Esophagus muscularis mucosa (tissue), 4 donors: ENCODE measurements at regions of chr3 and their contacts with region 1.

Region 1: DNA sequence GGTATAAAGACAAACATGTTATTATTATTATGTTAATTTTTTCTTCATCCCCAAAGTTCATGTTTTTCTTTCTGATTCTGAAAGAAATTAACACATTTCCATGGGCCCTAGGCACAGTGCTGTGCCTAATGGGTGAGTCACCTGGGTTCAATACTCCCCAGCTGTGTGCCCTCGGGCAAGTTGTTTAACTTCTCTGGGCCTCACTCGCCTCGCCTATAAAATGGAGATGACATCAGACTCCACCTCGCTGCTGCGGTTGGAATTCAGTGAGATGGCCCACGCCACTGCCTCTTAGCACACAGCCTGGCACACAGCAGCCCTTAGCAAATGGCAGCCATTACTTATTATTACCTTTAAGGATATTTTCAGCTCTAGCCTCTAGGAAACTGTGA is 22.6 kb downstream of the DNASE1L3 start:
- DNase-seq: no peak
- H3K4me3 ChIP-seq: no peak overlapping the region
- H3K27ac ChIP-seq: no peak overlapping the region
- H3K4me1 ChIP-seq: peaks cover 0 to 13% (median 3%) of the 10 kb centered on the region in 4 donors
- H3K27me3 ChIP-seq: no peaks in the 10 kb centered on the region
- CTCF ChIP-seq: no peak
- EP300 ChIP-seq: no peak
- POLR2A ChIP-seq: no peak

Region 2: GRCh38 chr3:58025837-58026569 is 162.2 kb before region 1 on chr3:
- intact Hi-C with region 1: no loop called
- DNase-seq: no peak
- H3K4me3 ChIP-seq: peak overlapping the region in 3 of 4 donors; percentile 6 to 15 (median 14)
- H3K27ac ChIP-seq: peak overlapping the region; percentile 83 to 92 (median 86)
- H3K4me1 ChIP-seq: peaks cover 22 to 86% (median 78%) of the 10 kb centered on the region in 4 donors
- H3K27me3 ChIP-seq: no peaks in the 10 kb centered on the region
- CTCF ChIP-seq: no peak
- EP300 ChIP-seq: no peak
- POLR2A ChIP-seq: no peak

Region 3: DNA sequence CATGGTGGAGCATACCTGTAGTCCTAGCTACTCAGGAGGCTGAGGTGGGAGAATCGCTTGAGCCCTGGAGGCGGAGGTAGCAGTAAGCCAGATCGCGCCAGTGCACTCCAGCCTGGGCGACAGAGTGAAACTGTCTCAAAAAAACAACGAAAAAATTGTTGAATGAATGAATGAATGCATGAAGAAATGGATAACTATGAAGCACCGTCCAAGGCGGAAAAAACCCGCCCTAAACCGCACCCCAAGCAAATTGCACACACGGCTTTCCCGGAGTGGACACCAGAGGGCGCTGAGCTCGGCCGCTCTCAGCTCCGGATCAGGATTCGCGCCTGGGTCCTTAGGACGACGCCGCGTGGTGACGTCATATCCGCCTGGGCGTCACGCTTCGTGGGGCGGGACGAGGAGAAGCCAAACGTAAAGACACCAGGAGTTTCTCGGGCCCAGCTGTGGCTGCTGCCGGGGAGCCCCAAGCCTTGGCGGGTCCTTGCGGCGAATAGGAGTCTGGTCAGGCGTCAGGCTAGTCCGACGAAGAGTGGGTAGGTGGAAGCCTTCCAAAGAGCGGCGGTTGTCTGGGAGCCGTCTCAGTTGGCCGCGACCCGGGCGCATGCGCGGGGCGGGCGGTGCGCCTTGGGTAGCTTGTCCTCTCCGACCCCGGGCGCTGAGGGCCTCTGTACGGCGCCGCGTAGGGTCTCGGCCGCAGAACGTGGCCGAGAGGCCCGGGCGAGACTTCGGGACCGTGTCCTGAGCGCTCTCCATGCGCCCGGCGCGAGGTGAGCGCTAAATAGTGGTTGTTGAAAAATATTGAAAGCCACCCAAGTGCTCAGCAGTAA is 117.9 kb after region 1 on chr3 and contains the starts of genes HTD2 and RPP14:
- intact Hi-C with region 1: loop called (anchors 2 kb)
- DNase-seq: peak; percentile 100
- H3K4me3 ChIP-seq: peak within 1 kb of the TSS; percentile 73 to 87 (median 80)
- H3K27ac ChIP-seq: peak within 1 kb of the TSS; percentile 96 to 97 (median 96)
- H3K4me1 ChIP-seq: peaks cover 24 to 44% (median 38%) of the 10 kb centered on the region in 4 donors
- H3K27me3 ChIP-seq: peaks cover 0 to 5% (median 0%) of the 10 kb centered on the region in 4 donors
- CTCF ChIP-seq: peak; percentile 93 to 98 (median 97)
- EP300 ChIP-seq: no peak
- POLR2A ChIP-seq: peak; percentile 47
- total RNA-seq, gene HTD2: 7.5 to 12.3 (median 10.4) TPM
- total RNA-seq, gene RPP14: 9.1 to 16.0 (median 10.4) TPM

Region 4: DNA sequence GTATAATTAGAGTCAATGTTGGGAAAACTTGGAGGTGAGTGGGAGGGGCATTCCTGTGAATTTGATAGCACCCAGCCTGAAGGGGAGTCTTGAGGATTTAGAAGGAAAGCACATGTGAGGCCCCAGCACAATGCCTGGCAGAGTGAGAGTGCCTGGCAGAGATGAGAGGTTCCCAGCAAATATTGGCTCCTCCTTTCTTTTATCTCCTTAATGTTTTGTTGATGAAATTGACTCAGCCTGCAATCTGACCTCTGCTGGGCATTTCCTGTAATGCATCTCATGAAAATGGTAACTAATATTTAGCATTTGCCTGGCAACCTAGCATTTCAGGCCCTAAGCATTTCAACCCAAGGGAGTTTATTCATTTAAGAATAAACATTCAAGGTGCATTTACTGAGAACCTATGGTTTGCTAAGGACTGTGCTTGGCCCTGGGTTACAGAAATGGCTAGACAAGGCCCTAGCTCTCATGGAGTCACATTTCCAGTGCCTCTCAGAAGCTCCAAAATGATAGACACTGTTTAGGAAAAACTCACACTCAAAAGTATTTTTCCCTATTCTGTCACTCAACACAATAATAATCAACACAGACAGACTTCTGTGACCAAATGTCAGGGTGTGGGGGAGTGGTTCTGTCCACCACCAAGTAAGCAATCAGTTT is 226.5 kb after region 1 on chr3:
- intact Hi-C with region 1: loop called (anchors 10 kb)
- DNase-seq: no peak
- H3K4me3 ChIP-seq: no peak overlapping the region
- H3K27ac ChIP-seq: peak overlapping the region in 1 of 4 donors; percentile 51
- H3K4me1 ChIP-seq: peaks cover 17 to 21% (median 20%) of the 10 kb centered on the region in 4 donors
- H3K27me3 ChIP-seq: no peaks in the 10 kb centered on the region
- CTCF ChIP-seq: peak; percentile 81 to 85 (median 83)
- EP300 ChIP-seq: no peak
- POLR2A ChIP-seq: no peak

Region 5: DNA sequence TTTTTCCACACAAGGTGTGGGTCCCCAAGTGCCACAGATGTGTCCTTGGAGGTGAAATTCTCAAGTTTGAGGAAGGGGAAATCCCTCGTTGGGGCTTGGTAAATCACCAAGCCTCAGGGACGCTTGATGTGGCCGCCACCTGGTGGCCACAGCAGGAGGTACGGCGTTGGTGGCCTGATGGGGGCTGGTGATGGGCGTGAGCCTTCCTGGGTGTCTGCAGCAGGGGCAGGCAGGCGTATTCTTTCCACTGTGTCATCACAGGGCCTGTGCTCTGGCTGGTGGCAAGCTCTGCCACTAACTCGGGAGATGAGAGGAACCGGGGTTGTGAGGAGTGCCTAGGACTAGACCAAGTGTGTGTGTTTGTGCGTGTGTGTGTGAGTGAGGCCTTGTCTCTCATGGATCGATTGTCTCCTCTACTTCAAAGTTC is 344.6 kb after region 1 on chr3:
- intact Hi-C with region 1: loop called (anchors 10 kb)
- DNase-seq: no peak
- H3K4me3 ChIP-seq: no peak overlapping the region
- H3K27ac ChIP-seq: no peak overlapping the region
- H3K4me1 ChIP-seq: peaks cover 29 to 59% (median 42%) of the 10 kb centered on the region in 4 donors
- H3K27me3 ChIP-seq: no peaks in the 10 kb centered on the region
- CTCF ChIP-seq: peak; percentile 85 to 97 (median 88)
- EP300 ChIP-seq: no peak
- POLR2A ChIP-seq: no peak